Tibial artery (tissue), 4 donors: ENCODE measurements at regions of chr11 and their contacts with region 1.

Region 1: GRCh38 chr11:119196833-119197483 is 9.2 kb upstream of the CBL start:
- DNase-seq: peak in 1 of 2 donors; percentile 56
- H3K4me3 ChIP-seq: no peak overlapping the region
- H3K27ac ChIP-seq: no peak overlapping the region
- H3K4me1 ChIP-seq: no peaks in the 10 kb centered on the region
- H3K27me3 ChIP-seq: no peaks in the 10 kb centered on the region
- CTCF ChIP-seq: peak; percentile 78 to 79

Region 2: DNA sequence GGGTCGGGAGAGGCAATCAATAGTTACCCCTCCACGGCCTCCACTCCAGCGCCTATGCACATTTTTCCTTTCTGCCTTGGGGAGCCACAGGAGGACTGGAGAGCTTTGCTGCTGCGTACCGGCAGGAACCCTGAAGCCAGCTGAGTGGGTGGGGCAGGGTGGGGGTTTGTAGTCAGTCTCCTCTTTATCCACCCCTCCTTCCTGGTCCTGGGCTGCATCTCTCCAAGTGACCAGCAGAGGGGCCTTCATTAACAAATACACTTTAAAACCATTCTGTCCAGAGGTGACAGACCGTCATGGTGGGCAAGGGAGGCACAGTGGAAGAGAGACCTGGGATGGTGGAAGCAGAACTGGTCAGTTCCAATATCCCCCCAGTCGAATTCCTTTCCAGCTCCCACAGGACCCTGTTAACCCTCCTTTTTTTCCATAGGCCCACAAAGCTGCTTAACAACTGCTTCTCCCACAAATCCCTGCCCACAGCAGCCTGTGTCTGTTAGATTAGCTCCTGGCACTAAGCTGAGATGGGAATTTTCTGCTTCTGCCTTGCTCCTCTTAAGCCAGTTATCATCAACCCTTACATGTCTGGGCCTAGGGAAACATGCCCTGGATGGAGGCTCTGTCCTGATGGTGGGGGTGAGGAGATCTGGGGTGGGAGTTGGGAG is 52.0 kb before region 1 on chr11:
- intact Hi-C with region 1: loop called (anchors 10 kb)
- DNase-seq: peak in 1 of 2 donors; percentile 69
- H3K4me3 ChIP-seq: no peak overlapping the region
- H3K27ac ChIP-seq: no peak overlapping the region
- H3K4me1 ChIP-seq: peaks cover 0 to 23% (median 14%) of the 10 kb centered on the region in 4 donors
- H3K27me3 ChIP-seq: peaks cover 0 to 50% of the 10 kb centered on the region in 2 donors
- CTCF ChIP-seq: peak; percentile 60 to 71

Region 3: DNA sequence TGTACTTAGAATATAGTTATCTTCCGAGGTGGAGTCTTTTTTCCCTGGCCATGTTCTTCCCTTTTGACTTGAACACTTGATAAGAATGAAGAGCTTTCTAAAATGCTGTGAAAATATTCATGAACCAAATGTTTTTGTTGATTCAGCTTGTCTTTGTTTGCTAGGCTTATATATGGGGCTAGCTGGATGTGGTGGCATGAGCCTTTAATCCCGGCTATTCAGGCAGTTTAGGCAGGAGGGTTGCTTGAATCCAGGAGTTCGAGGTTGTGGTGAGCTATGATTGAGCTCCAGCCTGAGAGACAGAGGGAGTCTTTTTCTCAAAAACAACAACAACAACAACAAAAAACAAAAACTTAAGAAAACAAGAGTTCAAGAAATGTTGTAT is 32.3 kb after region 1 on chr11:
- intact Hi-C with region 1: no loop called
- DNase-seq: no peak
- H3K4me3 ChIP-seq: no peak overlapping the region
- H3K27ac ChIP-seq: no peak overlapping the region
- H3K4me1 ChIP-seq: peaks cover 0 to 15% (median 0%) of the 10 kb centered on the region in 4 donors
- H3K27me3 ChIP-seq: no peaks in the 10 kb centered on the region
- CTCF ChIP-seq: no peak

Region 4: GRCh38 chr11:119828006-119828405 is 631.0 kb after region 1 on chr11:
- intact Hi-C with region 1: no loop called
- DNase-seq: no peak
- H3K4me3 ChIP-seq: no peak overlapping the region
- H3K27ac ChIP-seq: no peak overlapping the region
- H3K4me1 ChIP-seq: no peaks in the 10 kb centered on the region
- H3K27me3 ChIP-seq: peaks cover 0 to 14% of the 10 kb centered on the region in 2 donors
- CTCF ChIP-seq: no peak